ENCODE measurements at regions of chr2 and their contacts with region 1.

Region 1: GRCh38 chr2:28267282-28267681 is 125.4 kb upstream of the FOSL2 start:
- DNase-seq: no peak
- H3K4me3 ChIP-seq: no peak overlapping the region
- H3K27me3 ChIP-seq: no peaks in the 10 kb centered on the region
- CTCF ChIP-seq: no peak

Region 2: GRCh38 chr2:27960237-27960912 is 306.9 kb before region 1 on chr2:
- CTCF ChIA-PET with region 1: no interaction called
- POLR2A ChIA-PET with region 1: interaction called, 10 read pairs
- DNase-seq: peak; percentile 81
- H3K4me3 ChIP-seq: no peak overlapping the region; the same call in 1 of the 2 replicates
- H3K27me3 ChIP-seq: no peaks in the 10 kb centered on the region
- CTCF ChIP-seq: no peak